ENCODE measurements at regions of chr18 and their contacts with region 1.

Region 1: GRCh38 chr18:12886498-12887126 is 2.6 kb upstream of the PTPN2 start:
- DNase-seq: peak in 3 of 4 donors; percentile 23 to 41 (median 28)
- ATAC-seq: no peak
- H3K4me3 ChIP-seq: no peak overlapping the region
- H3K27ac ChIP-seq: no peak overlapping the region
- H3K4me1 ChIP-seq: peaks cover 28% of the 10 kb centered on the region
- H3K27me3 ChIP-seq: no peaks in the 10 kb centered on the region
- CTCF ChIP-seq: peak in 5 of 7 experiments; percentile 9 to 33 (median 24)
- POLR2A ChIP-seq: no peak

Region 2: DNA sequence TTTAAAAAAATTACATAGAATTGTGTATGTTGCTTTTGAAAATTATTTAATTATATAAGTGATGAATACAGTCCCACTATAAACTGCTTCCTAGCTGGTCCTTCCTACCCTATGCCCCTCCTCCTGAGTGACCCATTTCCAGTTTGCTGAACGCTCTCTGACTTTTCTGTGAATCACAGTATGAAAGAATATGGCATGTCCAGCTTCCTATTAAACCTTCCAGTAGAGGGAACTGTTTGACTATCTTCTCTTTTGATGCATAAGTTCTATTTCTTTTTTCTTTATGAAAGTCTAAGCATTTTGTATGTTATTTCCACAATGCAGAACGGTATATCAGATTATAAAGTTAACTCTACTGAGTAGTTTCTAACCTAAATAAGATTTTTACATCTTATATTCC is 142.5 kb before region 1 on chr18:
- intact Hi-C with region 1: loop called (anchors 10 kb)
- DNase-seq: no peak
- ATAC-seq: no peak
- H3K4me3 ChIP-seq: no peak overlapping the region
- H3K27ac ChIP-seq: no peak overlapping the region
- H3K4me1 ChIP-seq: no peaks in the 10 kb centered on the region
- H3K27me3 ChIP-seq: no peaks in the 10 kb centered on the region
- CTCF ChIP-seq: peak in 5 of 7 experiments; percentile 46 to 64 (median 55)
- POLR2A ChIP-seq: no peak

Region 3: DNA sequence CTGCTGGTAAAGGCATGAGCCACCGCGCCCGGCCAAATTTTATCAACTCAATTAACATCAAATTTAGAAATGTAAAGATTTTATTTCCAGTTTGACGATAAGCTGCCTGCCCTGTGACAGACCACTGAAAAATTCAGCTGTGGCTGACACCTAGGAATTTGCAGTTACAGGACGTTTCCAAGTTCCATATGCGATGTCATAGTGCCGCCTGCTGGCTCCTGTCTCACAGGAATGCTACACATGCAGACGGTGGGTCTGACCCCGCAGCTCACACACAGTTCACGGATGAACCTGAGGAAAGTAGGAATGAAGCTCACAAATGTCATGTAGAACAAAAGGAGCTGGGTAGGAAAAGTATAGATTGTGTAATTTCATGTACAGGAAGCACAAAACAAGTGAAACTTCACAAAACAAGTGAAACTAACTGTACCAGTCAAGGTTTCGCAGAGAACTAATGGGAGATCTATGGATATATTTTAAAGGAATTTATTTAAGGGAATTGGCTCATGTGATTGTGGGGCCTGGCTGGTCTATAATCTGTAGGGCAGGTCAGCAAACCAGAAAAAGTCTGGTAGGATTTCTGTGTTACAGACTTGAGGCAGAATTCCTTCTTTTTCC is 48.0 kb after region 1 on chr18:
- intact Hi-C with region 1: loop called (anchors 5 kb)
- DNase-seq: peak; percentile 80 to 88 (median 86)
- ATAC-seq: peak; percentile 95
- H3K4me3 ChIP-seq: no peak overlapping the region
- H3K27ac ChIP-seq: no peak overlapping the region
- H3K4me1 ChIP-seq: no peaks in the 10 kb centered on the region
- H3K27me3 ChIP-seq: no peaks in the 10 kb centered on the region
- CTCF ChIP-seq: peak; percentile 59 to 90 (median 89)
- POLR2A ChIP-seq: no peak

Region 4: DNA sequence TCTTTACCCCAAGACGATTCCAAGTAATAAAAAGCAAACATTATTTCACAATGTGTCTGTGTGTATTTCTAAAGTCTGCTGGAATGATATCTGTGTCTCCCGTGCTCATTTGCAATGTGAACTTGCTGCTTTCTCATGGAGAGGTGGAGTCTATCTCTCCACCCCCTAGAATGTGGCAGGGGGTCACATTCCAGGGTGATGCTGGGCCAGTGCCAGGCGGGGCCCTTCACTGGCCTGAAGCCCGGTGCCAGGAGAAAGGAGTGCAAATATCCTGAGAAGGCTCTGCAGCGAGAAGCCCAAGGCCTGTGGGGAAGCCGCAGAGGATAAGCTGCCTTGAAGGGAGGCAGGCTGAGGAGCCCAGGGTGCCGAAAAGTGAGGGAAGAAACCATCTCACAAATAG is 305.2 kb after region 1 on chr18:
- intact Hi-C with region 1: no loop called
- DNase-seq: peak; percentile 31 to 62 (median 42)
- ATAC-seq: peak; percentile 73
- H3K4me3 ChIP-seq: no peak overlapping the region
- H3K27ac ChIP-seq: no peak overlapping the region
- H3K4me1 ChIP-seq: peaks cover 8% of the 10 kb centered on the region
- H3K27me3 ChIP-seq: no peaks in the 10 kb centered on the region
- CTCF ChIP-seq: no peak
- POLR2A ChIP-seq: no peak

Region 5: DNA sequence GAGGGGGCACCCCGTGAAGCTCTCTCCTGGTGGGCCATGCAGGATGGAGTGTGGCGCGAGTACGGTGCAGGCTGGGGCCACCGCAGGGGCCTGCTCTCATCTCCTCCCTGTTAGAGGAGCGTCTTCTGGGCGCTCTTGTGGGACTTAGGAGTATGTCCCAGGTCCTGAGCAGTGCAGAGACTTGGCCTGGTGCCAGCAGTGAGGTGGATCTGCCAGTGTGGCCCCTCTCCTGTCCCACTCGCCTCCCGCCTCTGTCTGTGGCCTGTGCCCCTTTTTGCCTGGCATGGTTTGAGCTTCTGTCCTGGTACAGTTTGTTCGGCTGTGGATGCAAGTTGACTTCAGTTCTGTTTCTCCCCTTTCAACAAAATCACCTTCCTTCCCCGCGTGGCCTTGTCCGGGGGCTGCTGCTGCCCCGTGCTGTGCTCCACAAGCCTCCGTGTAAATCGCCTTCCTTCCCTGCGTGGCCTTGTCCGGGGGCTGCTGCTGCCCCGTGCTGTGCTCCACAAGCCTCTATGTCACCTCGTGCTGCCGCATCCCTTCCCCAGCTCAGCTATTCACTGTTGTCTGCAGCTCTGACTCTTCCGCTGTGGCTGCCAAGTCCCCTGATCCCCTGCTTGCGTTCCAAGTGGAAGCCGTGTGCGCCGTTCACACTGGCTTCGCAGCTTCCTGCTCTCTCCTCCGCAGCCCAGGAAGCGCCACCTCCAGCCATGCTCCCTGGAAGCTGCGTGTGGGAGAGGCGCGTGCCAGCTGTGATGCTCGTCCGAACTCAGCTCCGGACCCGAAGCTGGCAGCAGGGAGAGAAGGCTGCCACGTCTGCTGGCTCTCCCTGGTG is 345.7 kb after region 1 on chr18:
- intact Hi-C with region 1: no loop called
- DNase-seq: peak in 1 of 4 donors; percentile 20
- ATAC-seq: peak; percentile 27
- H3K4me3 ChIP-seq: no peak overlapping the region
- H3K27ac ChIP-seq: no peak overlapping the region
- H3K4me1 ChIP-seq: no peaks in the 10 kb centered on the region
- H3K27me3 ChIP-seq: no peaks in the 10 kb centered on the region
- CTCF ChIP-seq: no peak
- POLR2A ChIP-seq: no peak

Measured in body of pancreas (tissue), 4 donors.